ENCODE measurements at regions of chr15 and their contacts with region 1.

Region 1: DNA sequence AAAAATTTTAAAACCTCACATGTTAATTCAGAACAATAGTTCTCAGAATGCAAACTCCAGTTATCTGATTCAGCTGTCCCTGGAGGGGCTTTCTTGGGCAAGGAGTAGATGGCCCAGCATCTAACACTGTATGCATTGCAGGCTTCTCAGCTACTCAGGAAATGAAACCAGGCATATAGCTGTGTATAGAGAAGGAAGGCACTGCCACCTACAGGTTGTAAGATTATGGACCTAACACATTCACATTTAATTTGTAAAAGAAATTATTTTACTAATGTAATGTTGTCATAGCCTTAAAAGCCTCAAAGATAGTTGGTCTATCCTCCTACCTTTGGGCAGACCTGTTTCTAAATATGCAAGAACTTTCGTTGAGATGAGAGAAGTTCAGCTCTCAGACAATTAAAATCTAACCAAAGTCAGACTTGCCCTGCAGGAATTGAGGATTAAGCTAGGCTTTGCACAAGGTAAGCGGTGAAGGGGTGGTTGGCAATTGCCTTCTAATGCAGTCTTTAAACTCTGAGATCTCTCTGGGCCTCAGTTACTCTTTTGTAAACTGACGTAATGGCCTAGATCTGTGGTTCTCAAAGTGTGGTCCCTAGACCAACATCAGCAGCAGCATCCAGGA is 132.8 kb upstream of the SLC24A5 start:
- DNase-seq: peak; percentile 44
- ATAC-seq: peak; percentile 85
- H3K4me3 Mint-ChIP-seq: no peak overlapping the region
- H3K27ac Mint-ChIP-seq: no peak overlapping the region
- H3K4me1 Mint-ChIP-seq: no peaks in the 10 kb centered on the region
- H3K27me3 Mint-ChIP-seq: peaks cover 2% of the 10 kb centered on the region

Region 2: GRCh38 chr15:47196057-47196456 is 792.0 kb before region 1 on chr15:
- CTCF ChIA-PET with region 1: interaction called, 23 read pairs
- POLR2A ChIA-PET with region 1: no interaction called
- DNase-seq: peak; percentile 58
- ATAC-seq: no peak
- H3K4me3 Mint-ChIP-seq: no peak overlapping the region
- H3K27ac Mint-ChIP-seq: no peak overlapping the region
- H3K4me1 Mint-ChIP-seq: no peaks in the 10 kb centered on the region
- H3K27me3 Mint-ChIP-seq: no peaks in the 10 kb centered on the region

Region 3: GRCh38 chr15:47711654-47712053 is 276.4 kb before region 1 on chr15:
- CTCF ChIA-PET with region 1: interaction called, 15 read pairs
- POLR2A ChIA-PET with region 1: no interaction called
- DNase-seq: no peak
- ATAC-seq: no peak
- H3K4me3 Mint-ChIP-seq: no peak overlapping the region
- H3K27ac Mint-ChIP-seq: no peak overlapping the region
- H3K4me1 Mint-ChIP-seq: no peaks in the 10 kb centered on the region
- H3K27me3 Mint-ChIP-seq: peaks cover 10% of the 10 kb centered on the region

Region 4: DNA sequence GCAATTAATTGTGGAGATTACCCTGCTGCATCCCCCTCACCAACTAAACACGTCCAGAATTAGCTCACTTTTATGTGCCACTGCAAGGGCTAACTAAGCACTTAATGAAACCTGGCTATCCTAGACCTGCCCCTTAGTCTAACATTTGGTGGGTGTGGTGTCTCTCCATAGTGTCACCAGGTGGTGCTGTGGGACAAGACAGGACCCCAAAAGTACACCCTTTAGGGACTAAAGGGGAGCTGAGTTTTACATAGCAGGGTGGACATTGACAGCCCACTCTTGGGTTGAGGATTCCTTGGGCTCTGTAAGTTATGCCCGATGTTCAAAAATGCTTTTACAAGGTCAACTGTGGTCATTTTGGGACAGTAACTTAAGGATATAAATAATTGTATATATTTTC is 348.9 kb after region 1 on chr15:
- CTCF ChIA-PET with region 1: no interaction called
- POLR2A ChIA-PET with region 1: no interaction called
- DNase-seq: peak; percentile 46
- ATAC-seq: peak; percentile 58
- H3K4me3 Mint-ChIP-seq: no peak overlapping the region
- H3K27ac Mint-ChIP-seq: no peak overlapping the region
- H3K4me1 Mint-ChIP-seq: peaks cover 51% of the 10 kb centered on the region
- H3K27me3 Mint-ChIP-seq: no peaks in the 10 kb centered on the region